Psoas muscle (tissue), 8 donors: ENCODE measurements at regions of chr5 and their contacts with region 1.

Region 1: GRCh38 chr5:82351754-82352145 is 73.6 kb upstream of the RPS23 start:
- DNase-seq: no peak
- ATAC-seq: peak; percentile 76 to 85 (median 78)
- H3K4me3 ChIP-seq: no peak overlapping the region
- H3K27ac ChIP-seq: no peak overlapping the region
- H3K4me1 ChIP-seq: peaks cover 19% of the 10 kb centered on the region
- H3K27me3 ChIP-seq: no peaks in the 10 kb centered on the region
- CTCF ChIP-seq: peak; percentile 85

Region 2: GRCh38 chr5:82386576-82386975 is 34.8 kb after region 1 on chr5:
- intact Hi-C with region 1: no loop called
- DNase-seq: no peak
- ATAC-seq: no peak
- H3K4me3 ChIP-seq: no peak overlapping the region
- H3K27ac ChIP-seq: no peak overlapping the region
- H3K4me1 ChIP-seq: no peaks in the 10 kb centered on the region
- H3K27me3 ChIP-seq: no peaks in the 10 kb centered on the region
- CTCF ChIP-seq: no peak

Region 3: DNA sequence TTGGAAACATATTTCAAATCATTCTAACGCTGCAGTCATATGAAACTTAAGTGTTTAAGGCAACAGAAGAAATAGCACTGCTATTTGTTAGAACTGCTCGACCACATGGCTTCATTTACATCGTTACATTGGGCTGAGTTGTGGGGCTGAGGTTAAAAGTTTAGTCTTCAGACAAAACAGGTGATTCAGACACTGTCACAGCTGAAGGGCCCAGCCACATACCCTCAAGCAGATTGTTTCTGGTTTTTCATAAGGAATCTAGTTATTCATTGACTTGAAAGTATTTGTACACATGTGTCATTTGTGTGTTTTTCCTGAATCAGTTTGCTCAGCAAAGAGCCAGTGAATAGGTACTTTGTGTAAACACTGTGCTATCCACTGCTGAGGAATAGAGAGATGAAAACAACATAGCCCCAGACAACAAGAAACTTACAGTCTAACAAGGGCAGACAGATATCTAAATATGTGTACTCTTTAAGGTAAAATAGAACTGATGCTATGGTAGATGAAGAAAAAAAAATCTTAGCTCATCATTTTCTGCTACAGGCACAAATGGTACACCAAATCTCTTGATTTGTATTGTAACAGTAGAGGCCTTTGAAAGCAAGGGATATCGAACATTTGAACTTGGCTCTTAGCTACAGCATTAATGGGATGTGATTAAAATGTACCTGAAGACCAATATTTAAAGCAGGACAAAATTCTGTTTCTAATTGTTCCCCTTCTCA is 284.0 kb after region 1 on chr5:
- intact Hi-C with region 1: loop called in 1 of 2 experiments (anchors 10 kb)
- DNase-seq: no peak
- ATAC-seq: no peak
- H3K4me3 ChIP-seq: no peak overlapping the region
- H3K27ac ChIP-seq: no peak overlapping the region
- H3K4me1 ChIP-seq: peaks cover 15% of the 10 kb centered on the region
- H3K27me3 ChIP-seq: no peaks in the 10 kb centered on the region
- CTCF ChIP-seq: no peak

Region 4: DNA sequence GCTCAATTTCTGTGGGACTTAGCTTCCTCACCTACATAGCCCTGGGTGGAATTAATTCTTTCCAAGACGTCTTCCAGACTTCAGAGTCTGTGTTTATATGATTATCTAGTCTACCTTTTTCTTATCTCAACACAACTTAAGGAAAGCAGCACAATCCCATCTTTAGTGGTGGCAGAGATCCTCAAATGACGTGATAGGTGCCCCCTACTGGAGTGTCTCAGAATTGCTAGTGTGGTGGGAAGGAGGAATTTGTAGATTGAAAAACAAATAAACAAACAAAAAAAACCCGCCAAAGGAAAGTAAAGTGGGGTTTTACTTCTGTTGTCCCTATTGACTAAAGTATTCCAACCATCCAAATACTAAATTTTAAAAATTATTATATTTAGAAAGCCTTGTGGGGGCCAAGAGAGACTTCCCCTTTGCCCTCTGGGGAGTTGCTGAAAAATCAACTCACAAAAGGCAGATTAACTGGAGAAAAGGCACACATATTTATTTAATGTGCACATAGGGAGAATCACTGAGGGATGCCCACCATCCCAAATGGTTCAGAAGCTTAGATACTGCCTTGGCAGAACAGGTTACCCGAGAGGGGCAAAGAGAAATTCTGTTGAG is 442.2 kb after region 1 on chr5:
- intact Hi-C with region 1: loop called in 1 of 2 experiments (anchors 5 kb)
- DNase-seq: no peak
- ATAC-seq: no peak
- H3K4me3 ChIP-seq: no peak overlapping the region
- H3K27ac ChIP-seq: no peak overlapping the region
- H3K4me1 ChIP-seq: no peaks in the 10 kb centered on the region
- H3K27me3 ChIP-seq: no peaks in the 10 kb centered on the region
- CTCF ChIP-seq: peak; percentile 54

Region 5: GRCh38 chr5:83564069-83564749 is 1212.5 kb after region 1 on chr5:
- intact Hi-C with region 1: loop called (anchors 2 to 5 kb)
- DNase-seq: no peak
- ATAC-seq: peak in 2 of 4 donors; percentile 52 to 73
- H3K4me3 ChIP-seq: no peak overlapping the region
- H3K27ac ChIP-seq: no peak overlapping the region
- H3K4me1 ChIP-seq: no peaks in the 10 kb centered on the region
- H3K27me3 ChIP-seq: no peaks in the 10 kb centered on the region
- CTCF ChIP-seq: peak; percentile 69